ENCODE measurements at regions of chr9 and their contacts with region 1.

Region 1: GRCh38 chr9:34546834-34547827 is 24.3 kb upstream of the ENHO start:
- DNase-seq: peak in 1 of 2 donors; percentile 75
- H3K4me3 ChIP-seq: no peak overlapping the region
- H3K27ac ChIP-seq: no peak overlapping the region
- H3K4me1 ChIP-seq: no peaks in the 10 kb centered on the region
- H3K27me3 ChIP-seq: no peaks in the 10 kb centered on the region
- CTCF ChIP-seq: peak in 2 of 3 experiments; percentile 32 to 51

Region 2: GRCh38 chr9:34403554-34404380 is 143.4 kb before region 1 on chr9:
- intact Hi-C with region 1: loop called (anchors 1 kb)
- DNase-seq: peak in 1 of 2 donors; percentile 81
- H3K4me3 ChIP-seq: no peak overlapping the region
- H3K27ac ChIP-seq: no peak overlapping the region
- H3K4me1 ChIP-seq: no peaks in the 10 kb centered on the region
- H3K27me3 ChIP-seq: no peaks in the 10 kb centered on the region
- CTCF ChIP-seq: peak; percentile 79 to 96 (median 95)

Region 3: DNA sequence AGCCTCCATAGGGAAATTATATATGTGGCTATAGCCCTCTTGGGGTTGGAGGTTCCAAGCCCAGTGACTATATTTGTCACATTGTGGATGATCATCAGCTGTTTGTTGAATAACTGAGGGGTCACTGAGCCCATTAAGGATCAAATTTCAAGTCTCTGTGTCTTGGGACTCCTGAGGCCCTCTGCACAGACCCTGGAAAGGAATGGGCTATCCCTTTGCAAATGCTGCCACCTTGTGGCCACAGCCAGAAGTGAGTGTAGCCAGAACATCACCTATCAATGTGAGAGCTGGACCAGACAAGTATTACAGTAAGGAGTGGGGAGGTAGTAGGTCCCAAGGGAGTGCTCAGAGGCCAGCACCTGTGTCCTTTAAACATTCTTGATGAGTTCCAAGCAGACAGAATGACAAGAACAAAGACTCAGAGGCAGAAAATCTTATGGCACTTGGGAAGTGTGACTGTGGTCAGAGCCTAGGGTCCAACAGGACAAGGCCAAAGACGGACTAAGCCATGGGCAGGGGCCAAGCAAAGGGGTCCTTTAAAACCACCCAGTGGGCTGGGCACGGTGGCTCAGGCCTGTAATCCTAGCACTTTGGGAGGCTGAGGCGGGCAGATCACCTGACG is 56.6 kb after region 1 on chr9:
- intact Hi-C with region 1: loop called (anchors 1 kb)
- DNase-seq: peak in 1 of 2 donors; percentile 93
- H3K4me3 ChIP-seq: no peak overlapping the region
- H3K27ac ChIP-seq: no peak overlapping the region
- H3K4me1 ChIP-seq: no peaks in the 10 kb centered on the region
- H3K27me3 ChIP-seq: no peaks in the 10 kb centered on the region
- CTCF ChIP-seq: peak; percentile 77 to 93 (median 88)